CD4-positive, alpha-beta memory T cell (primary cell): ENCODE measurements at regions of chr9 and their contacts with region 1.

Region 1: DNA sequence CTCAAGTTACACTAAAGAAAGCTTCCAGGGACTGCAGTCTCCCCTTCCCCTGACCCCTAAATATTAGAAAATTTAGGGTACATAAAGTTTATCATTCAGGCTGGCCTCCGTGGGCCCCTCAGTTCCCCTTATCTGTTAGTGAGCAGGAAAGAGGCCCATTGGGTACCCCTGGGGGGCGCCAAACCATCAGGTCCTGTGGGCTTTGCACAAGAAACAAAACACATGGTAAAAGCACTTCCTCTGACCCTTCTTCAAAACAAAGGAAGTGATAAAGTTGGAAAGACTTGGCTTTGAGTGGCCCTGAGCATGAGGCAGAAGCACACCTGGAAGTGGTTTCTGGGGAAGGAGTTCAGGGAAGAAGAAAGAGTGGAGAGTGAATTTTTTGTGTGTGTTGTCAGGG is 213.0 kb downstream of the SMARCA2 start:
- DNase-seq: no peak
- H3K4me3 ChIP-seq: no peak overlapping the region
- H3K4me3 Mint-ChIP-seq: no peak overlapping the region
- H3K27ac ChIP-seq: no peak overlapping the region
- H3K27ac Mint-ChIP-seq: no peak overlapping the region
- H3K4me1 ChIP-seq: no peaks in the 10 kb centered on the region
- H3K4me1 Mint-ChIP-seq: no peaks in the 10 kb centered on the region
- H3K27me3 ChIP-seq: no peaks in the 10 kb centered on the region
- H3K27me3 Mint-ChIP-seq: no peaks in the 10 kb centered on the region

Region 2: DNA sequence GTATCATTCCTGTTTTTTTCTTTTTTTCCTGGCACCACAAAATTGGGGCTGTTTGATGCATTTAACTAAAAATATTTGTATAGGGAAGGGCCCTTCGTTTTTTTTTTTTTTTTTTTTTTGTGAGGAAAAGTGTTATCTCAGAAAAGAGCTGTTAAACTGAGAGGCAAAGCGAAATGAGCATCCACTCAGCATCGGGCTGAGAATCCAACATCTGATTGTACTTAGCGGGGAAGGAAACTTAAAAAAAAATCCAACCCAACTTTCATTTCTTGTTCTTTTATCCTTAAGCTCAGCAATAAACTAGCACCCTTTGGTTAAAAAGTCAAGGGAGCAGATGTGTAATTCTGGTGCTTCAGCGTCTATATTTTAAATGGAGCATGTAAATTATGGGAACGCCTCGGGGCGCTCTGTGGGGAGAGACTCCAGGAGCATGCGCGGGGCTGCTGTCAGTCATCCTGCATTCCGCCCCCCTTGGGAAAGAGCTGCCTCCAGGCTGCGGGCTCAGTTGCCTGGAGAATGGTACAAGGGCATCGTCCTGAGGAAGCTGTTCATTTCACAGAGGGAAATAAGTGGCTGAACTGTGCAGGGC is 1144.7 kb before region 1 on chr9:
- CTCF ChIA-PET with region 1: no interaction called
- POLR2A ChIA-PET with region 1: no interaction called
- intact Hi-C with region 1: no loop called
- DNase-seq: no peak
- H3K4me3 ChIP-seq: no peak overlapping the region
- H3K4me3 Mint-ChIP-seq: no peak overlapping the region
- H3K27ac ChIP-seq: no peak overlapping the region
- H3K27ac Mint-ChIP-seq: no peak overlapping the region
- H3K4me1 ChIP-seq: no peaks in the 10 kb centered on the region
- H3K4me1 Mint-ChIP-seq: peaks cover 0 to 2% (median 0%) of the 10 kb centered on the region in 4 donors
- H3K27me3 ChIP-seq: no peaks in the 10 kb centered on the region
- H3K27me3 Mint-ChIP-seq: peaks cover 2 to 8% of the 10 kb centered on the region in 2 donors

Region 3: DNA sequence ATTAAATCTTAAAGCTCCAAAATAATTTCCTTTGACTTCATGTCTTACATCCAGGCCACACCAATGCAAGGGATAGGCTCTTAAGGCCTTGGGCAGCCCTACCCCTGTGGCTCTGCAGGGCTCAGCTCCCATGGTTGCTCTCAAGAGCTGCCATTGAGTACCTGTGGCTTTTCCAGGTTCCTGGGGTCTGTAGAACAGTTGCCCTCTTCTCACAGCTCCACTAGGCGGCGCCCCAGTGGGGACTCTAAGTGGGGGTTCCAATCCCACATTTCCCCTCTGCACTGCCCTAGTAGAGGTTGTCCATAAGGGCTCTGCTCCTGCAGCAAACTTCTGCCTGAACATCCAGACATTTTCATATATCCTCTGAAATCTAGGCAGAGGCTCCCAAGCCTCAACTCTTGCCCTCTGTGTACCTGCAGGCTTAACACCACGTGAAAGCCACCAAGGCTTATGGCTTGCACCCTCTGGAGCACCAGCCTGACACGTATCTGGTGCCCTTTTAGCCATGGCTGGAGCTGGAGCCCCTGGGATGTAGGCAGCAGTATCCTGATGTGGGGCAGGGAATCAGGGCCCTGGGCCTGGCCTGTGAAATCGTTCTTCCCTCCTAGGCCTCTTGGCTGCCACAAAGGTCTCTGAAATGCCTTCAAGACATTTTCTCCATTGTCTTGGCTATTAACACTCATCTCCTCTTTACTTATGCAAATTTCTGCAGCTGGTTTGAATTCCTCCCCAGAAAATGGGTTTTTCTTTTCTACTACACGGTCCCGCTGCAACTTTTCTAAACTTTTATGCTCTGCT is 27.9 kb before region 1 on chr9:
- CTCF ChIA-PET with region 1: no interaction called
- POLR2A ChIA-PET with region 1: no interaction called
- intact Hi-C with region 1: no loop called
- DNase-seq: no peak
- H3K4me3 ChIP-seq: no peak overlapping the region
- H3K4me3 Mint-ChIP-seq: no peak overlapping the region
- H3K27ac ChIP-seq: no peak overlapping the region
- H3K27ac Mint-ChIP-seq: peak overlapping the region in 1 of 7 donors; percentile 7
- H3K4me1 ChIP-seq: no peaks in the 10 kb centered on the region
- H3K4me1 Mint-ChIP-seq: peaks cover 0 to 3% (median under 1%) of the 10 kb centered on the region in 4 donors
- H3K27me3 ChIP-seq: no peaks in the 10 kb centered on the region
- H3K27me3 Mint-ChIP-seq: no peaks in the 10 kb centered on the region

Region 4: GRCh38 chr9:2281031-2281802 is 53.1 kb after region 1 on chr9:
- CTCF ChIA-PET with region 1: no interaction called
- POLR2A ChIA-PET with region 1: no interaction called
- intact Hi-C with region 1: loop called (anchors 10 kb)
- DNase-seq: no peak
- H3K4me3 ChIP-seq: no peak overlapping the region
- H3K4me3 Mint-ChIP-seq: no peak overlapping the region
- H3K27ac ChIP-seq: no peak overlapping the region
- H3K27ac Mint-ChIP-seq: no peak overlapping the region
- H3K4me1 ChIP-seq: no peaks in the 10 kb centered on the region
- H3K4me1 Mint-ChIP-seq: no peaks in the 10 kb centered on the region
- H3K27me3 ChIP-seq: no peaks in the 10 kb centered on the region
- H3K27me3 Mint-ChIP-seq: peaks cover 3 to 8% of the 10 kb centered on the region in 2 donors

Region 5: GRCh38 chr9:2336055-2336454 is 107.9 kb after region 1 on chr9:
- CTCF ChIA-PET with region 1: no interaction called
- POLR2A ChIA-PET with region 1: no interaction called
- intact Hi-C with region 1: no loop called
- DNase-seq: no peak
- H3K4me3 ChIP-seq: no peak overlapping the region
- H3K4me3 Mint-ChIP-seq: no peak overlapping the region
- H3K27ac ChIP-seq: no peak overlapping the region
- H3K27ac Mint-ChIP-seq: no peak overlapping the region
- H3K4me1 ChIP-seq: no peaks in the 10 kb centered on the region
- H3K4me1 Mint-ChIP-seq: no peaks in the 10 kb centered on the region
- H3K27me3 ChIP-seq: no peaks in the 10 kb centered on the region
- H3K27me3 Mint-ChIP-seq: peaks cover 3 to 4% of the 10 kb centered on the region in 2 donors